Spleen (tissue), 13 donors: ENCODE measurements at regions of chr19 and their contacts with region 1.

Region 1: GRCh38 chr19:52139252-52140031 is at the start of gene ZNF616:
- DNase-seq: peak; percentile 96
- H3K4me3 ChIP-seq: peak within 1 kb of the TSS; percentile 84 to 99 (median 91)
- H3K27ac ChIP-seq: peak within 1 kb of the TSS; percentile 88 to 97 (median 94)
- H3K4me1 ChIP-seq: peaks cover 7 to 28% (median 23%) of the 10 kb centered on the region in 6 donors
- H3K27me3 ChIP-seq: no peaks in the 10 kb centered on the region
- CTCF ChIP-seq: peak; percentile 75 to 90 (median 87)
- POLR2A ChIP-seq: peak in 1 of 3 donors; percentile 47
- total RNA-seq, gene ZNF616: 7.5 to 22.6 (median 10.3) TPM

Region 2: DNA sequence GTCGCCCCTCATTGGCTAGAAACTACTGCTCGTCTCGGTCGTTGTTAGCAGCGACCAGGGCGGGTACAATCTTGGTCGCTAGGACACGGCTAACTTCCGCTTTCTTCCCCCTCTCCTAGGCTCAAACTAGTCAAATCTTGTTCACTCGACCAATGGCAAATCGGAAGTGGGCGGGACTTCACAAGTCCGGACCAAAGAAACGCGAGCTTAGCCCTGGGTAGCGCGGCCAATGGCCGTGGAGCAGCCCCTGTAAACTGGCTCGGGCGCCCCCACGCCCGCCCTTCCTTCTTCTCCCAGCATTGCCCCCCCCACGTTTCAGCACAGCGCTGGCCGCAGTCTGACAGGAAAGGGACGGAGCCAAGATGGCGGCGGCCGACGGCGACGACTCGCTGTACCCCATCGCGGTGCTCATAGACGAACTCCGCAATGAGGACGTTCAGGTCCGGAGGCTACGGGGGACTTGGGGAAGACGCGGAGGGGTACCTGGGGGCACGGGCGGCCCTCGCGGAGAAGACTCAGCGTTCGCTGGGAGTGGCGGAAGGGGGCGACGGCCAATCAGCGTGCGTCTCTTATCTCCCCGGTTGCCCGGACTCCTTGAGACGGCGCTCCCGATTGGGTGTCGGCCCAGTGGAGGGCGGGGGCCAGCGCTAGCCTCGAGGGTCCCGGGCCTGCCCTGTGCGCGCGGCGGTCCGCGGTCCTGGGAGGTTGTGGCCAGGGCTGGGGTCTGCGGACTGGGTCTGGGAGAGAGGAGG is 50.5 kb after region 1 on chr19 and contains the start of gene PPP2R1A:
- intact Hi-C with region 1: loop called (anchors 5 kb)
- DNase-seq: peak; percentile 99
- H3K4me3 ChIP-seq: peak within 1 kb of the TSS; percentile 71 to 92 (median 83)
- H3K27ac ChIP-seq: peak within 1 kb of the TSS; percentile 96 to 100 (median 99)
- H3K4me1 ChIP-seq: peaks cover 36 to 57% (median 48%) of the 10 kb centered on the region in 6 donors
- H3K27me3 ChIP-seq: no peaks in the 10 kb centered on the region
- CTCF ChIP-seq: peak in 2 of 11 experiments; percentile 16 to 19
- POLR2A ChIP-seq: peak; percentile 67 to 94 (median 74)
- total RNA-seq, gene PPP2R1A: 148 to 200 (median 178) TPM

Region 3: DNA sequence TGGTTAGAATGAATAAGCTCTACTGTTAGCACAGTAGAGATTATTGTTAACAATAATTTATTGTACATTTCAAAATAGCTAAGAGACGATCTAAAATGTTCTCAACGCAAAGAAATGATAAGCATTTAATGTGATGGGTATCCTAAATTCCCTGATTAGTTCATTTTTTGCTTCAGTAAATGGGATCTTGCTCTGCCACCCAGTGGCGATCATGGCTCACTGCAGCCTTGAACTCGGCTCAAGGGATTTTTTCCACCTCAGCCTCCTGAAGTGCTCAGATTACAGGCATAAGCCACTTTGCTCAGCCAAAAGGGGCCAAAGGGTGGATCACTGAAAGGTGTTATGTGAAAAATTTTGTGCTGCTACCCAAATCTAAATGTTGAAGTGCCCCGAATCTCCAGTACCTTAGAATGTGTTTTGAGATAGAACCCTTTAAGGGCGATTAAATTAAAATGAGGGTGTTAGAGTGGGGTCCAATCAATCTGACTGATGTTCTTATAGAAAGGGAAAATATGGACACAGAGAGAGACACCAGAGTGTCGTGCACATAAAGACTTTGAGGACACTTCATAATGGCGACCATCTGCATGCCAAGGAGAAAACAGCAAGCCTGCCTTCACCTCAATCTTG is 98.4 kb after region 1 on chr19:
- intact Hi-C with region 1: loop called (anchors 2 kb)
- DNase-seq: peak; percentile 77
- H3K4me3 ChIP-seq: no peak overlapping the region
- H3K27ac ChIP-seq: no peak overlapping the region
- H3K4me1 ChIP-seq: peaks cover 0 to 5% (median 0%) of the 10 kb centered on the region in 6 donors
- H3K27me3 ChIP-seq: no peaks in the 10 kb centered on the region
- CTCF ChIP-seq: peak; percentile 82 to 95 (median 90)
- POLR2A ChIP-seq: no peak

Region 4: DNA sequence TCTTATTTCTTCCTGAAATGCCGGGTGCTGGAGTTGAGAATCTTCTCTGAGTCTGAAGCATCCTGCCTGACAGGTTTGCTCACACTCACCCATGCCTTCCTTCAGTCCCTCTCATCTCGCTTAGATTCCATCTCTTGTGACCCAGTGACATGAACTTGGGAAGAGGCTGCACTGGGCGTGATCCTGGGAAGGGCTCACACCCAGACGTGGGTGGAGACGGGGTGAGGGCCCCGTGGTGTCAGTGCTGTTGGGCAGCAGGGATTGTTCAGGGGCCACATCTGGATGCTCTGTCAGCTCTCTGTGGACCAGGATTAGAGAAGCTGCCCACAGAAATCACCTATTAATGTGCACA is 138.1 kb after region 1 on chr19:
- intact Hi-C with region 1: no loop called
- DNase-seq: no peak
- H3K4me3 ChIP-seq: no peak overlapping the region
- H3K27ac ChIP-seq: no peak overlapping the region
- H3K4me1 ChIP-seq: peaks cover 0 to 51% (median 12%) of the 10 kb centered on the region in 6 donors
- H3K27me3 ChIP-seq: no peaks in the 10 kb centered on the region
- CTCF ChIP-seq: no peak
- POLR2A ChIP-seq: no peak